Aorta (tissue), 5 donors: ENCODE measurements at regions of chr20 and their contacts with region 1.

Region 1: GRCh38 chr20:38113401-38114325 is 51.4 kb downstream of the TGM2 start:
- DNase-seq: no peak
- ATAC-seq: no peak
- H3K4me3 ChIP-seq: no peak overlapping the region
- H3K27ac ChIP-seq: no peak overlapping the region
- H3K4me1 ChIP-seq: peaks cover 2 to 8% of the 10 kb centered on the region in 2 donors
- H3K27me3 ChIP-seq: no peaks in the 10 kb centered on the region

Region 2: GRCh38 chr20:37392421-37393178 is 721.1 kb before region 1 on chr20:
- intact Hi-C with region 1: no loop called
- DNase-seq: peak; percentile 33 to 60
- ATAC-seq: no peak
- H3K4me3 ChIP-seq: no peak overlapping the region
- H3K27ac ChIP-seq: no peak overlapping the region
- H3K4me1 ChIP-seq: no peaks in the 10 kb centered on the region
- H3K27me3 ChIP-seq: no peaks in the 10 kb centered on the region

Region 3: DNA sequence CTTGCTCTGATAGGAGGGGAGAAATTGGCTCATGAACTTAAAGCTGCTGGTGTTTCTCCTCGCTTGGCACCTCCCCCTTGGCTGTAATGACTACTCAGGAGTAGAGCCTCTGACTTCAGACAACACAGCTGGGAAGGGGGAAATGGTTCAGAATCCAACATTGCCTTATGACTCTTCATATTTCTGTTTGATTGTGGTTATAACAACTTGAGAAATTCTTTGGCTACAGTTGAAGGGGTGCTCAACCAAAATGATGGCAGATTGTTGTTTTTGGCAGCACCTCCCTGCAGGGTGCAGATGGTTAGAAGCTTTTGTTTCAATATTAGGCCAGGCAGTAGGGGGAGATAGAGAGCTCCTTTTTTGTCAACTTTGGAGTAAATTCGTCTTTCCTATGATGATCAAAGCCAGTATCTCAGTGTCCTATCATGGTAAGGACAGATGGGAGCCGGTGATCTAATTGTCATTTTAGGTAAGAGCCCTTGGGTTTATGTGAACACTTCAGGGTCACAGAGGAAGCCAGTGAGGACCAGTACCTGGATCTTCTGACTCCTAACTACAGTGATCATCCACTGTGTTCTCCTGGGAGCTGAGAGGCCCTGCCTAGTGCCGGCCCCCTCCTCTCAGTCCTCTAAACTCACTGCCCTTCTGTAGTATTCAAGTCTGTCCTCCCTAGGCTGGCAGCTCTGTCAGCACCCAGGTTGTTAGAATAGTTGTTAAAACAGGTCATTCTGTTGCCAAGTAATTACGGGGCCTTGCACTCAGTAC is 40.2 kb before region 1 on chr20:
- intact Hi-C with region 1: loop called (anchors 5 kb)
- DNase-seq: peak in 1 of 2 donors; percentile 77
- ATAC-seq: peak; percentile 90
- H3K4me3 ChIP-seq: no peak overlapping the region
- H3K27ac ChIP-seq: peak overlapping the region; percentile 51 to 85
- H3K4me1 ChIP-seq: peaks cover 7% of the 10 kb centered on the region in 2 donors
- H3K27me3 ChIP-seq: no peaks in the 10 kb centered on the region